Endothelial cell of umbilical vein (primary cell): ENCODE measurements at regions of chr9 and their contacts with region 1.

Region 1: DNA sequence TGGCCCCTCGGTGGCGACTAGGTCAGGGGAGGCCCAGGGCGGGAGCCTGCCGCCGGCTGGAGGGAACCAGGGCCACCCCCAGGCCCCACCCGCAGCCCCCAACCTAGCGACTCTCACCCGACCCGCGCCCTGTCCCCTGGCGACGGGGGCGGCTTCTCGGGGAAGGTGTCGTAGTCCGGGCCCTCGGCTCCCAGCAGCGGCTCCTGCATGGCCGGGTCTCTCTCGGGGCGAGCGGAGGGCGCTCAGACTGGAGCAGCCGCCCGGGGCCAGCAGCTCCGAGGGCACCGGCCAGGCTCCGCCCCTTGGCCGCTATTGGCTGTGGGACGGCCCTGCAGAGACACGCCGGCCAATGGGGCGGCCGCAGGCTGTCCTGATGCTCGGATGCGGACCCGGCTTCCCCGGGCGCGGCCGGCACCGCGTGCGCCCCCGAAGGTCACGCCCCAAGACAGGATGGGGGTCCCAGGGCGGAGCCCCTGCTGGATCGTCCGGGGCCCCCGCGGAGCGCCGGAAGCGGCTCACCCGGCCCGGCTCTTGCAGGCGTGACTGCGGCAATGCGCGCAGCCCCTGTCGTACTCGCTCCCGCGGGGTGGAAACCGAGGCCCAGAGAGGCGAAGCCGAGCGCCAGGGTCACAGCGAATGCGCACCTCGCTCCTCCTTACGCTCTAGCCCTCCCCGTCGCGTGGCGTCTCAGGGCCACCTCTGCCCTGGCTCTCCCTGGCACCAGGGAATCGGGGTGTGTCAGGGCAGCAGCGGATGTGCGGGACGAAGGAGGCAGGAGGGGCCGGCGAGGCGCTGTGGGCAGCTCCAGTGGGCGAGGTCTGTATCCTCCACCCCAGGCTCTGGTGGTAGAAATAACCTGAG is at the start of gene SLC2A6:
- DNase-seq: peak; percentile 78
- H3K4me3 ChIP-seq: peak within 1 kb of the TSS; percentile 50 to 73 (median 69)
- H3K27ac ChIP-seq: peak within 1 kb of the TSS; percentile 52
- H3K4me1 ChIP-seq: peaks cover 6% of the 10 kb centered on the region
- H3K27me3 ChIP-seq: no peaks in the 10 kb centered on the region
- CTCF ChIP-seq: no peak
- POLR2A ChIP-seq: peak; percentile 72
- total RNA-seq, gene SLC2A6: 35.7 and 39.0 TPM in 2 replicates

Region 2: GRCh38 chr9:133356391-133357091 is 122.5 kb before region 1 on chr9 and contains the starts of genes SURF1 and SURF2:
- CTCF ChIA-PET with region 1: no interaction called
- POLR2A ChIA-PET with region 1: no interaction called
- dilution Hi-C with region 1: no loop called
- intact Hi-C with region 1: loop called (anchors 2 kb)
- DNase-seq: peak; percentile 44
- H3K4me3 ChIP-seq: peak within 1 kb of the TSS; percentile 62 to 78 (median 77)
- H3K27ac ChIP-seq: peak within 1 kb of the TSS; percentile 60
- H3K4me1 ChIP-seq: peaks cover 10% of the 10 kb centered on the region
- H3K27me3 ChIP-seq: no peaks in the 10 kb centered on the region
- CTCF ChIP-seq: no peak
- POLR2A ChIP-seq: peak; percentile 65
- total RNA-seq, gene SURF1: 12.0 and 22.8 TPM in 2 replicates
- total RNA-seq, gene SURF2: 9.3 and 10.6 TPM in 2 replicates

Region 3: DNA sequence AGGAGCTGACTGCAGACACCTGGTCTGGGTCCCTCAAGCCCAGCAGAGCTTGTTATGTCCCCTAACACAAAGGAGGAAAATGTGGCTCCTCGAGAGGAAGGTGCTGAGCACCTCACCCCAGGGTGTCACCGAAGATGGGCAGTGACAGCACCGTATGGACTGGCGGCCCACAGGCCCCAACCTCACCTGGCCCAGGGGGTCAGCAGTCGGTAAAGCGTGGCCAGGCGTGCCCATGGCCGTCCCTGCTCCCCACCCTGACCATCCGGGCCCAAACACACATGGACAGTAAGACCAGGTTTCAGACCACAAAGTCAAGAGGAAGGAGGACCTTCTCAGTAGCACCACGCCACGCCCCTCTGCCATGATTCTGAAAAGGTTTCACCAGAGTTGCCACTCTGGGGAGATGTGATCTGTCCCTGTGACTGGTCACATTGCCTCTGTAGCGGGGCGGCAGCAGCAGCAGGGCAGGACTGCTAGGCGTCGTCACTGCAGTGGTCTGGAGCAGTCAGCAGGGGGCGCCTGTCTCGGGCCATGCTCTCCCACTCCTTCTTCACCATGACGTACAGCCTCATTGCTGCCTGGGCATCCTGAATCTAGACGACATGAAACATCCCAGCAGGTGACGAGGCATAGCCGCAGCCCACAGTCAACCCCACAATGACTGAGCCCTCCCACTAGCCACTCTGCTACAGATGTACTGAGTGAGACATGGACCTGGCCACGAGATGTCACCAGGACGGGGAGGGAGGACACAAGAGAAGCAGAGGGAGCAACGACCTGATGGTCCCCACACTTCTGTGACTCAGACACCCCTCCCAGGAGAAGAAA is 72.4 kb before region 1 on chr9:
- CTCF ChIA-PET with region 1: no interaction called
- POLR2A ChIA-PET with region 1: no interaction called
- dilution Hi-C with region 1: no loop called
- intact Hi-C with region 1: loop called (anchors 2 kb)
- DNase-seq: peak; percentile 66
- H3K4me3 ChIP-seq: no peak overlapping the region
- H3K27ac ChIP-seq: no peak overlapping the region
- H3K4me1 ChIP-seq: peaks cover 6% of the 10 kb centered on the region
- H3K27me3 ChIP-seq: no peaks in the 10 kb centered on the region
- CTCF ChIP-seq: peak; percentile 97 to 98
- POLR2A ChIP-seq: no peak

Region 4: DNA sequence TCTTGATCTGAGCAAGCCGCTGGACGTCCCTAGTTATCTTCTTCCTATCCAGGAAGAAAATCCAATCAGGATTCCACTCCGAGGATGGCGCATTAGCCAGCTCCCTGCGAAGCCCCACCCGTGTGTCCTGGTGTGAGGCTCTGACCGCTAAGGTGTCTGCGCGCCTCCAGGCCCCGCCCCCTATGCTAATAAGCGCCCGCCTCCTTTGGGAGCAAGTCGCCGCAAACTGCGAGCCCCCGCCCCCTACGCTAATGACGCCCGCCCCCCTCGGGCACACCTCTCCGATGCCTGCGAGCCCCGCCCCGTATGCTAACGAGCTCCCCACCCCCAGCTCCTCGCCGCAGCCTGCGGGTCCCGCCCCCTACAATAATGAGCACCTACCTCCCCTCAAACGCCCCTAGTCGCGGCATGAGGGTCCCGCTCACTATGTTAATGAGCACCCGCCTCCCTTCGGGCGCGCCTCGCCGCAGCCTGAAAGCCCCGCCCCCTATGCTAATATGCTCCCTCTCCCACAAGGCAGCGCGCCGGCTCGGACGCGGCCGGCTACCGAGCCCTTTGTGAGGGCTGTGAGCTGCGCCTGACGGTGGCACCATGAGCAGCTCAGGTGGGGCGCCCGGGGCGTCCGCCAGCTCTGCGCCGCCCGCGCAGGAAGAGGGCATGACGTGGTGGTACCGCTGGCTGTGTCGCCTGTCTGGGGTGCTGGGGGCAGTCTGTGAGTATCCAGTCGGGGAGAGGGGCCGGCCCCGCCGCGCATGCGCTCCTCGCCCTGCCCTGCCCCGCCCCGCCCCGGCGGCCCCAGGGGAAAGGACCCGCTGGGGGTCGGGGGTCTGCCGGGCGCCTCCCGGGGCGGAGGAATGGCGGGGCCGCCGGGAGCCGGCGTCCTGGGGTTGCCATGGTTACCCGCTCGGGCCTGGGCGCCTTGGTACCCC is 19.3 kb before region 1 on chr9 and contains the start of gene CACFD1:
- CTCF ChIA-PET with region 1: no interaction called
- POLR2A ChIA-PET with region 1: interaction called, 8 read pairs
- dilution Hi-C with region 1: no loop called
- intact Hi-C with region 1: loop called (anchors 1 kb)
- DNase-seq: peak; percentile 95
- H3K4me3 ChIP-seq: peak within 1 kb of the TSS; percentile 50 to 82 (median 63)
- H3K27ac ChIP-seq: peak within 1 kb of the TSS; percentile 68
- H3K4me1 ChIP-seq: peaks cover 9% of the 10 kb centered on the region
- H3K27me3 ChIP-seq: no peaks in the 10 kb centered on the region
- CTCF ChIP-seq: peak in 1 of 2 donors; percentile 5
- POLR2A ChIP-seq: peak; percentile 67
- total RNA-seq, gene CACFD1: 9.7 and 9.8 TPM in 2 replicates